ENCODE measurements at regions of chr10 and their contacts with region 1.

Region 1: DNA sequence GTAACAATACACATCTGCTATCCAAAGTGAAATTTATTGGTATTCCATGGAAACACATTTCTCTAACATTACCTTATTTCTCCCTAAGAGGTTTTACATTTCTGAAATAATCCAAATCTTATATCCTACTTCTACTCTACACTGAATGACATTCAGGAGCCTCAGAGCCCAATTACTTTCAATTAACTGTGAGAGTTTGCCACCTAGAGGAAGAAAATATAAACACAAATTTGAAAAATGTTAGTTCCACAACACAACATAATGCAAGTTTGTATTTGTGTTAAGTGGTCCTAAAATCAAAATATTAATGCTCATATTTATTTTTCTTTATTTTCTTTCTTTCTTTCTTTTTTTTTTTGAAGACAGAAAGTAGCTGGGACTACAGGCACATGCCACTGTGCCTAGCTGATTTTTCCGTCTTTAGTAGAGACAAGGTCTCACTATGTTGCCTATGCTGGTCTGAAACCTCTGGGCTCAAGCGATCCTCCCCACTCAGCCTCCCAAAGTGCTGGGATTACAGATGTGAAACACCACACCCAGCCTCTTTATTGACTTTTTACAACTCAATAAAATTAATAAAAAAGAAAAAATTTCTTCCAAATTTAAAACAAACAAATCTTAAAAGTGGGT is 46.0 kb downstream of the ATAD1 start:
- DNase-seq: no peak
- ATAC-seq: peak in 1 of 4 donors; percentile 30
- H3K4me3 ChIP-seq: no peak overlapping the region
- H3K27ac ChIP-seq: no peak overlapping the region
- H3K4me1 ChIP-seq: peaks cover 0 to 12% (median 0%) of the 10 kb centered on the region in 12 donors
- H3K27me3 ChIP-seq: no peaks in the 10 kb centered on the region
- CTCF ChIP-seq: peak; percentile 42 to 67 (median 54)
- POLR2A ChIP-seq: no peak

Region 2: GRCh38 chr10:87531908-87532622 is 239.9 kb before region 1 on chr10:
- intact Hi-C with region 1: loop called in 1 of 10 experiments (anchors 5 kb)
- DNase-seq: peak in 2 of 5 donors; percentile 12 to 31
- ATAC-seq: peak; percentile 50 to 79 (median 70)
- H3K4me3 ChIP-seq: peak overlapping the region in 6 of 12 donors; percentile 1 to 12 (median 4)
- H3K27ac ChIP-seq: peak overlapping the region; percentile 34 to 67 (median 58)
- H3K4me1 ChIP-seq: peaks cover 0 to 25% (median 12%) of the 10 kb centered on the region in 12 donors
- H3K27me3 ChIP-seq: no peaks in the 10 kb centered on the region
- CTCF ChIP-seq: no peak
- POLR2A ChIP-seq: no peak

Measured in heart left ventricle (tissue), 16 donors.